ENCODE measurements at regions of chr16 and their contacts with region 1.

Region 1: GRCh38 chr16:57519796-57520360 is 16.5 kb downstream of the CCDC102A start:
- DNase-seq: peak; percentile 36 to 94
- H3K4me3 ChIP-seq: no peak overlapping the region
- CTCF ChIP-seq: peak in 1 of 3 donors; percentile 87
- POLR2A ChIP-seq: no peak

Region 2: DNA sequence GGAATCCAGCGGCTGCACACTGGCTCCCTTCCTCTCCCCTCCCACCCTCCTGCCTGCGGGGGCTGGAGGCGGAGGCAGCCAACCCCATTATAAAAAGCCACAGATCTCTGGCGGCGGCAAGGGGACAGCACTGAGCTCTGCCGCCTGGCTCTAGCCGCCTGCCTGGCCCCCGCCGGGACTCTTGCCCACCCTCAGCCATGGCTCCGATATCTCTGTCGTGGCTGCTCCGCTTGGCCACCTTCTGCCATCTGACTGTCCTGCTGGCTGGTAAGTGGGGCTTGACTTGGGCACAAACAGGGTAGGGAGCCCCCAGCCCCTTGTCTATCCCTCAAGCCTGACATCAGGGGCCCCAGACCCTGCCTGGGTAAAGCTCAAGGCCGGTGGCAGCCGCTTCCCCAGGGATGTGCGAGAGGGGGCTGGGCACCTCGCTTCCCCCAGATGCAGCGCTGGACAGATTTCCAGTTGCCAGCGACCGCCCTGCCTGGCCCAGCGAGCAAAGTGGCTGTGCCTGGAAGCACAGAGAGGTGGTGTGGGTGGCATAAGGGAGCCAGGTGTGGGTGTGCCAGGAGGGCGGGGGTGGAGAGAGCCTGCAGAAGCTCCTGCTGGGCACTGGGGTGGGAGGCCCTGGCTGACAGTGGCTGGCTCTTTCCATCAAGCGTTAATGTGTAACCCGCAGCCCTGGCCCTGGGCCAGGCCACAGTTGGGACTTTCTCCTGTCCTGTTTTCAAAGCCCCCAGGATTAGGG is 147.3 kb before region 1 on chr16 and contains the start of gene CX3CL1:
- intact Hi-C with region 1: no loop called
- DNase-seq: peak; percentile 55 to 89
- H3K4me3 ChIP-seq: peak within 1 kb of the TSS; percentile 31
- CTCF ChIP-seq: peak in 1 of 3 donors; percentile 7
- POLR2A ChIP-seq: no peak
- total RNA-seq, gene CX3CL1: 5.8 to 31.9 (median 18.3) TPM

Region 3: GRCh38 chr16:57416122-57416509 is 103.8 kb before region 1 on chr16:
- intact Hi-C with region 1: loop called (anchors 5 kb)
- DNase-seq: no peak
- H3K4me3 ChIP-seq: no peak overlapping the region
- CTCF ChIP-seq: no peak
- POLR2A ChIP-seq: no peak

Measured in lower leg skin (tissue), 4 donors.